ENCODE measurements at regions of chr5 and their contacts with region 1.

Region 1: DNA sequence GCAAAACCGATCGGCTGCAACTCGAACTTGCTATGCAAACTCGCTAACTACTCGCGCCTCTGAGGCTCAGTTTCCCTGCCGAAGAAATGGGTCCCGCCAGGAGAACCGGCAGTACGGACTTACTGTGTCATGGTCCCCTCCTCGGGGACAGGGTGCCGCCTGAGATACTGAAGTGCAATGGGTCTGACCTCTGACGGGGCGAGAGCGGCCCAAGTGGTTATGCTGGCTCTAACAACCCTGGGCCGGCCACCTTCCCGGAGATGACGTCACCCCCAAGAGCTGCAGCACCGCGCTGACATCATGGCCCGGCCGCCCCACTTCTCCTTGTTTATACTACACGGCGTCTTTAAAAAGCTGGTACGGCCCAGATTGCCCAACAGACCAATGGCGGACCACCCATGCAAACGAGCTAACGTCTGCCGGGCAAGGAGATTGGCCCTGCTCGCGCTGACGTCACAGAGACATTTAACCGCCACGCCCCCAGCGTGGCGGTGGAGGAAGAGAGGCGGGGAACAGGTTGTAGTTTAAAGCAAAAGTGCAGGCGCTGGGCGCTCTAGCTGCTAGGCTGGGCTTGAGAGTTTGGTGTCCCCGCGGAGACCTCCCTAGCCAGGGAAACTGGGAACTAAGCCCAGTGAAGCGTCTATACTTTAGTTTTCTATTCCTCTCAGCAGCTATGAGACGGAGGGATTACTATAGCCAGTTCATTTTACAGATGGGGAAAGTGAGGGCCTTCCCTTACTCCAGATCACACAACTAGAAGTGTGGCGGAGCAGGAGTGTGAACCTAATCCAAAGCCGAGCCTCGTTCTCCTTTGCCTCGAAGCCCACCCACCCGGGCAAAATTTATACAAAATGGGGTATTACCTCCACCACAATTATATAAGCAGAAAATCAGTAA is 654 bp upstream of the RNF44 start:
- DNase-seq: peak; percentile 100
- H3K4me3 ChIP-seq: peak overlapping the region; percentile 84
- CTCF ChIP-seq: no peak
- POLR2A ChIP-seq: no peak

Region 2: GRCh38 chr5:176415952-176416924 is 121.6 kb before region 1 on chr5 and contains the start of gene CLTB:
- intact Hi-C with region 1: loop called (anchors 10 kb)
- DNase-seq: peak; percentile 86 to 97
- H3K4me3 ChIP-seq: peak within 1 kb of the TSS; percentile 96
- CTCF ChIP-seq: no peak
- POLR2A ChIP-seq: no peak
- total RNA-seq, gene CLTB: 707 to 959 (median 743) TPM